WTC11 (cell line): ENCODE measurements at regions of chr1 and their contacts with region 1.

Region 1: DNA sequence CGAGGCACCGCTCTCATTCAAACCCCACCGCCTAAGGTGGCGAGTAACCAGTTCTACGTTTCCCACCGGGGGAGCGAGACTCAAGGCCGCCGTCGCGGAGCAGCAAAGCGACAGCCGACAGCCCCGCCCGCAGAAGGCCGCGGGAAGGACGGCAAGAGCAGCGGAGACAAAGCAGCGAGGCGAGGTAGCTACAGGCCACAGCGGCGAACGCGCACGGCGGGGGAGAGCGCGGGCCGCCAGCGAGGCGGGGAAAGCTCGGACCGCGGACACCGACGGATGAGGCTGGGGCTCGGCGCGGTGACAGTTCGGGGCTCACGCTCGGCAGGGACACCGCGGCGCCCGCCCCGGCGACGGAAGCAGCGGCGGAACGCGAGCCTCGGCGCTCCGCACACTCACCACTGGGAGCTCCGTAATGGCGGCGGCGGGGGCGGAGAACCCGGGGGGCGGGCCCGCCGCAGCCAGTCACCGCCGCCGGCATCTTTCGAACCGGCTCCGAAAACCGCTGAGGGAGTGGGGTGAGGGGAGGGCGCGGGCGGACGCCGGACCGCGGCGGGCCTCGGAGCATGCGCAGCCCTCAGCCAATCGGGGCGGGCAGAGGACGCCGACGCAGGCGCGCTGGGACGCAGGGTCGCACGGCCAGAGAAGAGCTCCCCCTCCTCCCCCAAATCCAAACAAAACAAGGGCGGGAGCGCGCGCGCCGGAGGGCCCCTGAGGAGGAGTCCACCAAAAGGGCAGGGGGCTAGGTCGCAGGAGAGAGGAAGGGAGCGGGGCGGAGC is 666 bp downstream of the HP1BP3 start:
- DNase-seq: peak; percentile 96
- ATAC-seq: peak; percentile 88
- H3K4me3 Mint-ChIP-seq: peak overlapping the region; percentile 100
- H3K27ac Mint-ChIP-seq: peak overlapping the region; percentile 98
- H3K4me1 Mint-ChIP-seq: peaks cover 24% of the 10 kb centered on the region
- H3K27me3 Mint-ChIP-seq: no peaks in the 10 kb centered on the region
- CTCF ChIP-seq: no peak

Region 2: GRCh38 chr1:20717452-20718342 is 68.7 kb before region 1 on chr1 and contains the start of gene KIF17:
- CTCF ChIA-PET with region 1: interaction called, 3 read pairs
- POLR2A ChIA-PET with region 1: interaction called, 10 read pairs
- DNase-seq: peak; percentile 80
- ATAC-seq: peak; percentile 65
- H3K4me3 Mint-ChIP-seq: peak within 1 kb of the TSS; percentile 75
- H3K27ac Mint-ChIP-seq: no peak within 1 kb of the TSS
- H3K4me1 Mint-ChIP-seq: peaks cover 12% of the 10 kb centered on the region
- H3K27me3 Mint-ChIP-seq: peaks cover 41% of the 10 kb centered on the region
- CTCF ChIP-seq: no peak
- total RNA-seq, gene KIF17: 8.1 to 16.1 TPM (median 14.3 TPM) in 3 replicates

Region 3: DNA sequence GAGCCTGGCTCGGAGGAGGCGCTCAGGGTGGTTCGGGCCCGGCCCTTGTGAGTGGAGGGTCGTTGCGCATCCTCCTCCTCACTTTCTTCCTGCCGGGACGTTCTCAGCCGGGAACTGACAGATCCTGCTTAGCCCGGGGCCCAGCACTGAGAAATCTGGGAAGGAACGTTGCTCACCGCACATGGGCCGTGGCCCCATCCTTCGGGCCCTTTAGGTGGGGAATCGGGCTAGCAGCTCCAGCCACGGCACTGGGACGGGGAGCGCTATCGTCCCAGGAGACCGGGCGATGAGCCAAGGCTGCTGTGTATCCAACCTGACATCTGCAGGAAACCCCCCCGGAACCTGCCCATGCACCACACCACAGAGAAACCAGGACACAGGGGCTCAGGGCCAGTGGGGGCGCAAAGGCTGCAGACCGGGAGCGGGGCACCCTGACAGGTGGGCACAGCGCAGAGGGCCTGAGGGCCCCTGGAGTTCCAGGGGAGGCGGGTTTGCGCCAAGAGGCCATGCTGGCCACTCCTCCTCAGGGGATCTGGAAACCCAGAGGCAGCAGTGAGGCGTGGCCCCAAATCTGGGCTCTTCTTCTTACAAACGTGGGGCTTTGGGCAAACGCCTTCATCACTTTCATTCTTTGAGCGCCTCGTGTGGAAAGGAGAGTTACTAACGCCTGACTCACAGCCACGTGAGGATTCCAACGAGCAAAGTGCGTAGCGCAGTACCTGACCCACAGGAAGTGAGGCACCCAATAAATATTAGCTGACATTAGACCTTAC is 53.7 kb before region 1 on chr1 and contains the start of gene SH2D5:
- CTCF ChIA-PET with region 1: interaction called, 5 read pairs
- POLR2A ChIA-PET with region 1: interaction called, 14 read pairs
- DNase-seq: peak; percentile 53
- ATAC-seq: peak; percentile 32
- H3K4me3 Mint-ChIP-seq: peak within 1 kb of the TSS; percentile 87
- H3K27ac Mint-ChIP-seq: no peak within 1 kb of the TSS
- H3K4me1 Mint-ChIP-seq: peaks cover 33% of the 10 kb centered on the region
- H3K27me3 Mint-ChIP-seq: peaks cover 55% of the 10 kb centered on the region
- CTCF ChIP-seq: no peak
- total RNA-seq, gene SH2D5: 13.4 to 17.8 TPM (median 13.8 TPM) in 3 replicates

Region 4: GRCh38 chr1:20847611-20848080 is 61.2 kb after region 1 on chr1:
- CTCF ChIA-PET with region 1: no interaction called
- POLR2A ChIA-PET with region 1: no interaction called
- DNase-seq: no peak
- ATAC-seq: no peak
- H3K4me3 Mint-ChIP-seq: no peak overlapping the region
- H3K27ac Mint-ChIP-seq: no peak overlapping the region
- H3K4me1 Mint-ChIP-seq: no peaks in the 10 kb centered on the region
- H3K27me3 Mint-ChIP-seq: no peaks in the 10 kb centered on the region
- CTCF ChIP-seq: no peak

Region 5: GRCh38 chr1:21189906-21190500 is 403.6 kb after region 1 on chr1:
- CTCF ChIA-PET with region 1: interaction called, 12 read pairs
- POLR2A ChIA-PET with region 1: no interaction called
- DNase-seq: no peak
- ATAC-seq: no peak
- H3K4me3 Mint-ChIP-seq: no peak overlapping the region
- H3K27ac Mint-ChIP-seq: no peak overlapping the region
- H3K4me1 Mint-ChIP-seq: no peaks in the 10 kb centered on the region
- H3K27me3 Mint-ChIP-seq: peaks cover 96% of the 10 kb centered on the region
- CTCF ChIP-seq: no peak